Endothelial cell of umbilical vein (primary cell): ENCODE measurements at regions of chr1 and their contacts with region 1.

Region 1: DNA sequence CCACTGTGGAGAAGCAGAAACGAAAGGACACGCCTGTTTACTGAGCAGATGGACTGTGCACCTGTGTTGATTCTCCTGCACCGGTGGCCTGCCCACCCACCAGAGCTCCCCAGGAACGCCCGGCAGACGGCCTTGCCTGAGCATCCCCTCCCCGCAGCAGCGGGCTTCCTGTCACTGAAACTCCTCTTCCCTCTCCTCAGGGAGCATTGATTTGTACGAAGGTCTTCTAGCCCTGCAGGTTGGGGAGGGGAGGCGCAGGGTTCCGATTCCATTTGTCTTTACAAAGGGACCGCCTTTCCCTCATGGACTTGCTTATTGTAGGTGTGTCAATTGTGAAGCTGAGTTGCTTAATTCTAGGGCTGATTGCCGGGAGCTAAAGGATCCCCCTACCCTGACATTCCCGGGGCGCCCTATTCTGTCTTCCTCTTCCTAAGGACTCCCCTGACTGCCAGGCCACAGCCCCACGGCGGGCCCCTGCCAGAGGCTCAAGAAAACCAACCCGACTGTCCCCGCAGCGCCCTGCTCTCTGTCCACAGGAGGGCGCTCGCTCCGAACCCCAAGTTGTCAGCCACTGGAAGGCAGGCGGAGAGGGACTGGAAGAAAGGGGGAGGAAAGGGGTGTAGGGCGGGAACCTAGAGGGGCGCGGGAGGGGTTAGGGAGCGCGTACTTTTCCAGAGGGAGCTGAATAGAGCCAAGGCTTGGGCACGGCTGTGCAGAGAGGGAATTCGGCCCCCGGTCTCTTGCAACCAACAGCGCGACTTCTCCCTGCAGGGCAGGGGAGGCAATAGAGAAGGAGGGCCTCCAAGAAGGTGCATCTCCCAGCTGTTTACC is 2.8 kb downstream of the S100A6 start:
- DNase-seq: peak; percentile 85
- H3K4me3 ChIP-seq: peak overlapping the region in 2 of 3 experiments; percentile 5 to 81
- H3K27ac ChIP-seq: peak overlapping the region; percentile 96
- H3K4me1 ChIP-seq: peaks cover 43% of the 10 kb centered on the region
- H3K27me3 ChIP-seq: no peaks in the 10 kb centered on the region
- CTCF ChIP-seq: peak; percentile 90
- POLR2A ChIP-seq: no peak

Region 2: DNA sequence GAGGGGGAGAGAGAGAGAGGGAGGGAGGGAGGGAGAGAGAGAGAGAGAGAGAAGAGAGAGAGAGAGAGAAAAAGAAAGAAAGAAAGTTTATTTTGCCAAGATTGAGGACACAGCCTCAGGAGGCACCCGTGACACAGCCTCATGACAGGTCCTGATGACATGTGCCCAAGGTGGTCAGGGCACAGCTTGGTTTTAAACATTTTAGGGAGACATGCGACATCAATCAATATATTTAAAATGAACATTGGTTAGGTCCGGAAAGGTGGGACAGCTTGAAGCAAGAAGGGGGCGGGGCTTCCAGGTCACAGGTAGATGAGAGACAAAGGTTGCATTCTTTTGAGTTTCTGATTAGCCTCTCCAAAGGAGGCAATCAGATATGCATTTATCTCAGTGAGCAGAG is 12.8 kb before region 1 on chr1:
- CTCF ChIA-PET with region 1: interaction called, 14 read pairs
- POLR2A ChIA-PET with region 1: interaction called, 3 read pairs
- dilution Hi-C with region 1: no loop called
- intact Hi-C with region 1: no loop called
- DNase-seq: no peak
- H3K4me3 ChIP-seq: no peak overlapping the region
- H3K27ac ChIP-seq: no peak overlapping the region
- H3K4me1 ChIP-seq: peaks cover 4% of the 10 kb centered on the region
- H3K27me3 ChIP-seq: no peaks in the 10 kb centered on the region
- CTCF ChIP-seq: no peak
- POLR2A ChIP-seq: no peak

Region 3: GRCh38 chr1:153545067-153546055 is 12.4 kb after region 1 on chr1 and contains the start of gene S100A4:
- CTCF ChIA-PET with region 1: interaction called, 12 read pairs
- POLR2A ChIA-PET with region 1: interaction called, 6 read pairs
- dilution Hi-C with region 1: no loop called
- intact Hi-C with region 1: loop called (anchors 1 kb)
- DNase-seq: peak; percentile 91
- H3K4me3 ChIP-seq: no peak within 1 kb of the TSS
- H3K27ac ChIP-seq: no peak within 1 kb of the TSS
- H3K4me1 ChIP-seq: peaks cover 21% of the 10 kb centered on the region
- H3K27me3 ChIP-seq: no peaks in the 10 kb centered on the region
- CTCF ChIP-seq: no peak
- POLR2A ChIP-seq: no peak
- total RNA-seq, gene S100A4: not detected in 2 replicates

Region 4: DNA sequence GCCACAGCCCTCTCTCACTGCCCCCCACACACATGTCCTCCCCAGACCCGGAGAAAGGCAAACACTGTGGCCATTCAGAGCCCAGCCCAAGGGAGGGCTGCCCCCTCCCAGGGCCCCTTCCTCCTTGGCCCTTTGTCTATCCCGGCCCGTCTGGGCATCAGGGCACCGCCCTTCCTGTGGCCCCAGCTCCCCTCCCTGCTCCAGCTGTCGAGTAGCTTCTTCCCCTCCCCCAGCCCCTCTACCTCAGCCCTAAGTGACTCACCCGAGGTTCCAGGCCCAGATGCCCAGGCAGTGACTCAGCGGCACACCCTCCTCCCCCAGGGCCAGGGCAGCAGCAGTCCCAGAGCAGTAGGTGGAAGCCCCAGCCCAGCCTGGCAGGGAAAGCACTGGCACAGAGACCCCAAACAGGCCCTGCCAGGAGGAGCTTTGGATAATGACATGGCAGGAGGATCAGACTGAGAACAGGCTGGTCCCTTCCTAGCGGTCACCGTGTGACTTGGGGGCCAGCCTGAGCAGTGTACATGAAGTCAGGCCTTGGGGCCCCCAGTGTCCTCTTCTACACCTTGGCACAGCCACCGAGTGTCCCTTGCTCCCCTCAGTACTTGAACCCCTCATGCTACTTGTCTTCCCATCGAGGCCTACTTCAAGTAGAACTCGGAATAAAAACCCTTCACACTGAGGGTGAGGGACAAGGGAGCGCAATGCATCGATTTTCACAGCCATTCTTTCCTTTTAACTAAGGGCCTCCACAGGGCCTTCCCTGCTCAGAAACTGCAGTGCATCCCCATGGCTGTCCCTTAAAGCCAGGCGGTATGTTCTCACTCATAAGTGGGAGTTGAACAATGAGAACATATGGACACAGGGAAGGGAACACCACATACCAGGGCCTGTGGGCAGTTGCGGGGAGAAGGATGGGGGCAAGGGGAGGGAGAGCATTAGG is 33.7 kb after region 1 on chr1:
- CTCF ChIA-PET with region 1: interaction called, 216 read pairs
- POLR2A ChIA-PET with region 1: interaction called, 32 read pairs
- dilution Hi-C with region 1: no loop called
- intact Hi-C with region 1: loop called (anchors 1 kb)
- DNase-seq: peak; percentile 96
- H3K4me3 ChIP-seq: no peak overlapping the region
- H3K27ac ChIP-seq: peak overlapping the region; percentile 99
- H3K4me1 ChIP-seq: peaks cover 34% of the 10 kb centered on the region
- H3K27me3 ChIP-seq: no peaks in the 10 kb centered on the region
- CTCF ChIP-seq: no peak
- POLR2A ChIP-seq: no peak

Region 5: GRCh38 chr1:153608742-153609584 is 76.0 kb after region 1 on chr1:
- CTCF ChIA-PET with region 1: interaction called, 10 read pairs
- POLR2A ChIA-PET with region 1: no interaction called
- dilution Hi-C with region 1: no loop called
- intact Hi-C with region 1: loop called (anchors 1 kb)
- DNase-seq: peak; percentile 98
- H3K4me3 ChIP-seq: peak overlapping the region; percentile 2 to 87 (median 86)
- H3K27ac ChIP-seq: peak overlapping the region; percentile 98
- H3K4me1 ChIP-seq: peaks cover 40% of the 10 kb centered on the region
- H3K27me3 ChIP-seq: no peaks in the 10 kb centered on the region
- CTCF ChIP-seq: no peak
- POLR2A ChIP-seq: peak; percentile 93

Region 6: GRCh38 chr1:153626922-153627796 is 94.2 kb after region 1 on chr1 and contains the start of gene S100A13:
- CTCF ChIA-PET with region 1: interaction called, 51 read pairs
- POLR2A ChIA-PET with region 1: interaction called, 4 read pairs
- dilution Hi-C with region 1: no loop called
- intact Hi-C with region 1: loop called (anchors 1 kb)
- DNase-seq: peak; percentile 90
- H3K4me3 ChIP-seq: peak within 1 kb of the TSS; percentile 57 to 74 (median 62)
- H3K27ac ChIP-seq: peak within 1 kb of the TSS; percentile 81
- H3K4me1 ChIP-seq: peaks cover 14% of the 10 kb centered on the region
- H3K27me3 ChIP-seq: no peaks in the 10 kb centered on the region
- CTCF ChIP-seq: peak; percentile 93
- POLR2A ChIP-seq: peak; percentile 98
- total RNA-seq, gene S100A13: 155 and 255 TPM in 2 replicates

Region 7: GRCh38 chr1:153633716-153634665 is 101.0 kb after region 1 on chr1 and contains the start of gene CHTOP:
- CTCF ChIA-PET with region 1: interaction called, 51 read pairs
- POLR2A ChIA-PET with region 1: interaction called, 6 read pairs
- dilution Hi-C with region 1: no loop called
- intact Hi-C with region 1: loop called (anchors 1 kb)
- DNase-seq: peak; percentile 100
- H3K4me3 ChIP-seq: peak within 1 kb of the TSS; percentile 65 to 96 (median 93)
- H3K27ac ChIP-seq: peak within 1 kb of the TSS; percentile 94
- H3K4me1 ChIP-seq: peaks cover 11% of the 10 kb centered on the region
- H3K27me3 ChIP-seq: no peaks in the 10 kb centered on the region
- CTCF ChIP-seq: no peak
- POLR2A ChIP-seq: peak; percentile 78
- total RNA-seq, gene CHTOP: 72.1 and 74.4 TPM in 2 replicates